Activated CD4-positive, alpha-beta T cell treated with anti-CD3 and anti-CD28 coated beads, Interleukin-2, amount 10 ng/mL, durations not matched to agents 24 days and 14 days (primary cell): ENCODE measurements at regions of chr18 and their contacts with region 1.

Region 1: GRCh38 chr18:2978646-2979045 is 34.3 kb downstream of the LPIN2 start:
- DNase-seq: peak; percentile 76
- H3K4me3 Mint-ChIP-seq: peak overlapping the region; percentile 81
- H3K27ac Mint-ChIP-seq: peak overlapping the region; percentile 93
- H3K4me1 Mint-ChIP-seq: peaks cover 73% of the 10 kb centered on the region
- H3K27me3 Mint-ChIP-seq: no peaks in the 10 kb centered on the region

Region 2: DNA sequence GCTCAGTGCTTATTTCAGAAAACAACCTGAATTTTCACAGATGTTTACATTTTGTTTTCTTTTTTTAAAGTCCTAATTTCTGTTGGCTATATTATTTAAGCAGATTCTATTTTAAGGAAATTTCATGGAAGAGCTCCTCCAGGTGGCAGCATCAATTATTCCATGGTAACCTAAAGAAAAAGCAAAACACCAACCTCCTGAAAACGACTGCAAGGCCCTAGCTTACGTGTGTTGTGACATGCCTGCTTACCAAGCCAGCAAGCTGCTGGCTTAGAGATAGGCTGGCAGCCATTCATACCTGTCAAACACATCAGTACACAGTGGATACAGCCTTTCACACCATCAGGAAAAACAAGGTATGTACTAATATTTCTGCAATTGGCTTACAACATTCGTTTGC is 30.6 kb before region 1 on chr18:
- intact Hi-C with region 1: loop called (anchors 5 kb)
- DNase-seq: no peak
- H3K4me3 Mint-ChIP-seq: no peak overlapping the region
- H3K27ac Mint-ChIP-seq: no peak overlapping the region
- H3K4me1 Mint-ChIP-seq: peaks cover 46% of the 10 kb centered on the region
- H3K27me3 Mint-ChIP-seq: no peaks in the 10 kb centered on the region